CD8-positive, alpha-beta T cell (primary cell): ENCODE measurements at regions of chr2 and their contacts with region 1.

Region 1: DNA sequence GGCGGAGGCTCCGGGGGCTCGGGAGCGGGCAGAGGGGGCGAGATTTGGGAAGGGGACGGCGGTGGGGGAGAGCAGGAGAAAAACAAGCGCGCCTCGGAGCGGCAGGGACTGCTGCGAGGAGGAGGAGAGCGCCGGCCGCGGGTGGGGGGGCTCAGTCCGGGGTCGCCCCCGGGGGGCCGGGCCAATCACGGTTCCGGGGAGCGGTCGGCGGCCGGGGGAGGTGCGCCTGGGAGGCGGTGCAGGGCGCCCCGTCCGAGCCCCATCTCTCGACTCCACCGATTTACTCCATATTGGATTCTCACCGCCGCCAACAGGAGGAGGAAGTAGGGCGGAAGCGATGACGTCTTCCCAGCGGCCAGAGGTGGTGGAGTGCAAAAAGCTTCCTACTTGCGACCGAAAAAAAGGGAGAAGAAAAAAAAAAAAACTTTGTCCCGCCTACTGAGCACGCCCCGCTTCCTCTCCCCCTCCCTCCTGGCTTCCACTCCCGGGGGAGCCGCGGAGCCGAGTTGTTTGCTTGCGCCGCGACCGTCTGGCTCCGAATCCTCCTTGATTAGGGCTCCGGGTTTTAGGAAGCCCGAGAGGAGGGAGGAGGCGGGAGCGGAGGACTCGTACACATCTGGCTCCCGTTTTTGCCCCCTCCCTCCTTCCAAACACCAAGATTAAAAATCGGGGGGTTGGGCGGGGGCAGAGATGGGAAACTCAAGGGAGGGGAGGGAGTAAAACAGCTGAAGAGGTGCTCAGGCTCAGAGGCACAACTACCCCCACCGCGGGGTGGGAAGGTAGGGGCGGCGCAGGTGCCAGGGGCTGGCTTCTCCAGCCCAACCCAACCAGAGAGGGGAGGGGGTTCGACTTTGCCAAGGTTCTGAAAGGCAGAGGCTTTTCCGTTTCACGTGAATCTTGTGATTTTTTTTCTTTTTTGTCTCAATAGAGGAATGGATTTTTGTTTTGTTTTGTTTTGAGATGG is at the start of gene SPRED2:
- DNase-seq: peak in 8 of 9 experiments; percentile 37 to 88 (median 64)
- ATAC-seq: peak; percentile 34
- H3K4me3 ChIP-seq: peak within 1 kb of the TSS; percentile 81 to 91
- H3K4me3 Mint-ChIP-seq: peak within 1 kb of the TSS; percentile 88
- H3K27ac ChIP-seq: peak within 1 kb of the TSS in 1 of 2 experiments; percentile 31
- H3K27ac Mint-ChIP-seq: peak within 1 kb of the TSS; percentile 29
- H3K4me1 ChIP-seq: peaks cover 32% of the 10 kb centered on the region
- H3K4me1 Mint-ChIP-seq: peaks cover 22% of the 10 kb centered on the region
- H3K27me3 ChIP-seq: peaks cover 18 to 31% of the 10 kb centered on the region in 2 experiments
- H3K27me3 Mint-ChIP-seq: peaks cover 38% of the 10 kb centered on the region
- CTCF ChIP-seq: no peak
- total RNA-seq, gene SPRED2: 2.3 to 2.5 TPM

Region 2: DNA sequence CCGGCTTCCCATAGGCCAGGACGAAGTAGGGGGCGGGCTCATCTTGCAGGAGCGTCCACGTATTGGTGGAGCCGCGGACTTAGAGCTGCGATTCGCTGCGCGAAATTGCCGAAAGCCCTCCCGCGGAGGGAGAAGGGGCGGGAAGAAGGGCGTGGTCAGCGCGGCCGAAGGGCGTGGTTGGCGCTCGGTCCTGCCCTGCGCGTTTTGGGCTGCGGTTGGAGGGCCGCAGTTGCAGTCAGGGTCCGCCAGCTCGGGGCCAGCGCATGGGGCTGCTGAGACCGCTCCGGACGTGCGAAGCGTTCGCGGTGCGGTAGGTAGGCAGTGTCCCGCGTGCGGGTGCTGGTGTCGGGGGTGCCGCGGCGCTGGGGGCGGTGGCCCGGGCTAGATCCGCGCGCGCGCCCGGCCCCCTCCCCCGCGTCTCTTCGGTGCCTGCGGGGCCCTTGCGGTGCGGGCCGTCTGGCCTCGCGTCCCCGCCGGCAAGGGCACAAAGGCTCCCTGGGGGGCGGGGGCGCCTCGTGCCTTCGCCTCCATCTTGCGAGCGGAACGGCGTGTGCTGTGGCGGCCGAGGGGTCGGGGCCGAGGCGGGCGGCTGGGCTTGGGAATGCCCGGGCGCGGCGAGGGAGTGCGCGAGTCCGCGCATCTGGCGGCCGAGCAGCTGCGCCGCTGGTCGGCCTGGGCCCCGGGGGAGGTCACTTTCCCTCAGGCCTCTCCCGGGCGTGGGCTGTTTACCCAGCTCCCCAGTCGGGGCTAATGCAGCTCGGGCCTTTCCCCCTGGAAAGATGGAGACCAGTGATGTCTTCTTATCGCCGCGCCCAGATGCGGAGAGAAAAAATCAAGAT is 376.1 kb before region 1 on chr2 and contains the start of gene CEP68:
- CTCF ChIA-PET with region 1: no interaction called
- POLR2A ChIA-PET with region 1: no interaction called
- intact Hi-C with region 1: loop called (anchors 5 kb)
- DNase-seq: peak; percentile 89 to 98 (median 96)
- ATAC-seq: peak; percentile 89
- H3K4me3 ChIP-seq: peak within 1 kb of the TSS; percentile 85 to 86
- H3K4me3 Mint-ChIP-seq: peak within 1 kb of the TSS; percentile 99
- H3K27ac ChIP-seq: peak within 1 kb of the TSS; percentile 62 to 72
- H3K27ac Mint-ChIP-seq: peak within 1 kb of the TSS; percentile 97
- H3K4me1 ChIP-seq: peaks cover 70% of the 10 kb centered on the region
- H3K4me1 Mint-ChIP-seq: peaks cover 73% of the 10 kb centered on the region
- H3K27me3 ChIP-seq: no peaks in the 10 kb centered on the region
- H3K27me3 Mint-ChIP-seq: no peaks in the 10 kb centered on the region
- CTCF ChIP-seq: no peak
- total RNA-seq, gene CEP68: 19.9 to 20.5 TPM

Region 3: GRCh38 chr2:65227425-65228262 is 204.9 kb before region 1 on chr2 and contains the start of gene ACTR2:
- CTCF ChIA-PET with region 1: no interaction called
- POLR2A ChIA-PET with region 1: no interaction called
- intact Hi-C with region 1: loop called (anchors 1 to 5 kb)
- DNase-seq: peak; percentile 87 to 98 (median 94)
- ATAC-seq: peak; percentile 94
- H3K4me3 ChIP-seq: peak within 1 kb of the TSS; percentile 74 to 89
- H3K4me3 Mint-ChIP-seq: peak within 1 kb of the TSS; percentile 99
- H3K27ac ChIP-seq: peak within 1 kb of the TSS; percentile 94 to 98
- H3K27ac Mint-ChIP-seq: peak within 1 kb of the TSS; percentile 99
- H3K4me1 ChIP-seq: peaks cover 43% of the 10 kb centered on the region
- H3K4me1 Mint-ChIP-seq: peaks cover 47% of the 10 kb centered on the region
- H3K27me3 ChIP-seq: no peaks in the 10 kb centered on the region
- H3K27me3 Mint-ChIP-seq: no peaks in the 10 kb centered on the region
- CTCF ChIP-seq: no peak
- total RNA-seq, gene ACTR2: 101 to 117 TPM

Region 4: GRCh38 chr2:65300761-65301711 is 131.5 kb before region 1 on chr2:
- CTCF ChIA-PET with region 1: no interaction called
- POLR2A ChIA-PET with region 1: no interaction called
- intact Hi-C with region 1: loop called (anchors 1 to 2 kb)
- DNase-seq: peak; percentile 32 to 87 (median 74)
- ATAC-seq: peak; percentile 93
- H3K4me3 ChIP-seq: peak overlapping the region; percentile 27 to 37
- H3K4me3 Mint-ChIP-seq: peak overlapping the region; percentile 75
- H3K27ac ChIP-seq: peak overlapping the region; percentile 3 to 54
- H3K27ac Mint-ChIP-seq: peak overlapping the region; percentile 94
- H3K4me1 ChIP-seq: peaks cover 34% of the 10 kb centered on the region
- H3K4me1 Mint-ChIP-seq: peaks cover 35% of the 10 kb centered on the region
- H3K27me3 ChIP-seq: peaks cover 0 to 6% of the 10 kb centered on the region in 2 experiments
- H3K27me3 Mint-ChIP-seq: peaks cover 3% of the 10 kb centered on the region
- CTCF ChIP-seq: no peak

Region 5: DNA sequence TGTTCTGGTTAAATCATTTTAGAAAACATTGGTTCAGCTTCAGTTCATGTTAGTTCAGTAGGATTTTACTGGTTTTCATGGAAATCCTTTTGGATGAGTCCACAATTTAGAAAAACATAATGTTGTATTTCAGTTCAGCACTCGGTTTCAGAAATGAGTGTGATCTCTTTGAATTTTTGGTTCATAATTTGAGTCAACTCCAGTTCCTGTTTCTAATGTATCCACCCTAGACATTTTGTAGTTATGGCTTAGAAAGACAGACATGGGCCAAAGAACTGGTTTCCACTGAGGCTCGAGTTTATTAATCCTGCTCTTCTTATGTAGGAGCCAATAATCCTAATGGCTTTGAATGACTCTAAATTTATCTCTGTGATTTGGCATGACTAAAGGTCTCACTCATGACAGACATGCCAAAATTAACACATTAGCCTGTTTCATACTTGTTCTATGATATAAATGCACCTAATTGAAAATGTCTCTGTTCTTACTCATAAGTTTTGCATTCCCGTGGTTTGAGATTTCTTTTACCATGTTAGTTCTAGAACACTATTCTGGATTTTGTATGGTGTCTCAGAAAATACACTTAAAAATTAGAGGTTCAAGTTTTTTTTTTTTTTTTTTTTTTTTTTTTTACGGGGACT is 82.2 kb after region 1 on chr2:
- CTCF ChIA-PET with region 1: no interaction called
- POLR2A ChIA-PET with region 1: no interaction called
- intact Hi-C with region 1: no loop called
- DNase-seq: no peak
- ATAC-seq: no peak
- H3K4me3 ChIP-seq: no peak overlapping the region
- H3K4me3 Mint-ChIP-seq: no peak overlapping the region
- H3K27ac ChIP-seq: no peak overlapping the region
- H3K27ac Mint-ChIP-seq: no peak overlapping the region
- H3K4me1 ChIP-seq: no peaks in the 10 kb centered on the region
- H3K4me1 Mint-ChIP-seq: no peaks in the 10 kb centered on the region
- H3K27me3 ChIP-seq: no peaks in the 10 kb centered on the region
- H3K27me3 Mint-ChIP-seq: peaks cover 13% of the 10 kb centered on the region
- CTCF ChIP-seq: no peak